OCI-LY7 (cell line): ENCODE measurements at regions of chr5 and their contacts with region 1.

Region 1: GRCh38 chr5:173736923-173737412 is 120.5 kb upstream of the BOD1 start:
- DNase-seq: peak; percentile 86
- H3K4me3 ChIP-seq: peak overlapping the region; percentile 45
- H3K27ac ChIP-seq: peak overlapping the region; percentile 98
- H3K4me1 ChIP-seq: peaks cover 97% of the 10 kb centered on the region
- CTCF ChIP-seq: no peak

Region 2: DNA sequence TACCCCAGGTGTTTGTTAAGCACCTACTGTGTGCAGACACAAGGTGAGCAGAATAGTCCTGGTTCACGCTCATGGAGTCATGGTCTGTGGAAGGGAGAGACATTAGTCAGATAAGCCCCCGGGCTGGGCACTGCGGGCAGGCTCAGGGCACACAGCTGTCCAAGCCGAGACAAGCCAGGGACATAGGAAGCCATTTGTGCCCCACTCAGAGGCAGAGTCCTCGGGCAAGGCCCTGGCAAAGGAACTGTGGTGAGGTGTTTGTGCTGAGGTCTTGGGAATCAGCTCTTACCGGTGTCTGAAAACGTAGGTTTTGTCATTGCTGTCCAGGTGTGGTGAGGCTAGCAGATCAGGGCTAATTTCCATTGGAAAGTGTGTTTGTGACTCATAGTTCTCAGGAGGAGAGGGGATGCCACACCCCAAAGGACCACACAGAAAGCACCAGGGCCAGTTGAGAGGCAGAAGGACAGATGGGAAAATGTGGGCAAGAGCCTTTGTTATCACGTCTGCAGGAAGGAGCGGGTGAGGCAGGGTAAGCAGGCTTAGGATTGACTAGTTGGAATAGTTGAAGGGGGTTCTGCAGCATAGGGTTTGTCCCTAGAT is 1142.0 kb before region 1 on chr5:
- CTCF ChIA-PET with region 1: no interaction called
- POLR2A ChIA-PET with region 1: no interaction called
- intact Hi-C with region 1: no loop called
- DNase-seq: no peak
- H3K4me3 ChIP-seq: no peak overlapping the region
- H3K27ac ChIP-seq: no peak overlapping the region
- H3K4me1 ChIP-seq: no peaks in the 10 kb centered on the region
- CTCF ChIP-seq: no peak

Region 3: GRCh38 chr5:173435447-173435846 is 301.5 kb before region 1 on chr5:
- CTCF ChIA-PET with region 1: no interaction called
- POLR2A ChIA-PET with region 1: no interaction called
- intact Hi-C with region 1: no loop called
- DNase-seq: no peak
- H3K4me3 ChIP-seq: no peak overlapping the region
- H3K27ac ChIP-seq: no peak overlapping the region
- H3K4me1 ChIP-seq: no peaks in the 10 kb centered on the region
- CTCF ChIP-seq: no peak

Region 4: GRCh38 chr5:173625696-173626504 is 111.1 kb before region 1 on chr5:
- CTCF ChIA-PET with region 1: interaction called, 4 read pairs
- POLR2A ChIA-PET with region 1: interaction called, 3 read pairs
- intact Hi-C with region 1: loop called (anchors 5 kb)
- DNase-seq: peak; percentile 83
- H3K4me3 ChIP-seq: no peak overlapping the region
- H3K27ac ChIP-seq: no peak overlapping the region
- H3K4me1 ChIP-seq: peaks cover 50% of the 10 kb centered on the region
- CTCF ChIP-seq: peak; percentile 78

Region 5: DNA sequence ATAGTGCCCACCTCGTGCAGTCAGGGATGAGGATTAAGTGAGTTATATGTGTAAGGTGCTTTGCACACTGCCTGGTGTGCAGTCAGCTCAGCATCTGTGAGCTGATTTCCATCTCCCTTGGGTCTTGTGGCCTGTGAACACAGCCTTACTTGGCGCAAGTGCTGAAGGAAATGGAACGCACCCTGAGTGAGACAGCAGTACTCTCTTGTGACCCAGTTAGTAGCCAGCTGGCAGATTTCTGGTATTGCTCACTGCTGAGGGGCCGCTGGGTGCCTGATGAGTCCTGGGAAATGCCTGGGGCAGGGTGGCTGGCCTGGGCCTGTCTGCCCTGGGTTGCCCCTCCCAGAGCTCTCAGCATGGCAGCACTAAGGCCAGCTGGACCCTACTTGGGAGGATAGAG is 29.6 kb before region 1 on chr5:
- CTCF ChIA-PET with region 1: interaction called, 3 read pairs
- POLR2A ChIA-PET with region 1: interaction called, 14 read pairs
- intact Hi-C with region 1: loop called (anchors 2 kb)
- DNase-seq: peak; percentile 91
- H3K4me3 ChIP-seq: peak overlapping the region; percentile 44
- H3K27ac ChIP-seq: peak overlapping the region; percentile 75
- H3K4me1 ChIP-seq: peaks cover 60% of the 10 kb centered on the region
- CTCF ChIP-seq: no peak

Region 6: GRCh38 chr5:173721256-173722232 is 15.4 kb before region 1 on chr5:
- CTCF ChIA-PET with region 1: interaction called, 8 read pairs
- POLR2A ChIA-PET with region 1: interaction called, 51 read pairs
- intact Hi-C with region 1: no loop called
- DNase-seq: no peak
- H3K4me3 ChIP-seq: no peak overlapping the region
- H3K27ac ChIP-seq: no peak overlapping the region
- H3K4me1 ChIP-seq: peaks cover 50% of the 10 kb centered on the region
- CTCF ChIP-seq: peak; percentile 63

Region 7: DNA sequence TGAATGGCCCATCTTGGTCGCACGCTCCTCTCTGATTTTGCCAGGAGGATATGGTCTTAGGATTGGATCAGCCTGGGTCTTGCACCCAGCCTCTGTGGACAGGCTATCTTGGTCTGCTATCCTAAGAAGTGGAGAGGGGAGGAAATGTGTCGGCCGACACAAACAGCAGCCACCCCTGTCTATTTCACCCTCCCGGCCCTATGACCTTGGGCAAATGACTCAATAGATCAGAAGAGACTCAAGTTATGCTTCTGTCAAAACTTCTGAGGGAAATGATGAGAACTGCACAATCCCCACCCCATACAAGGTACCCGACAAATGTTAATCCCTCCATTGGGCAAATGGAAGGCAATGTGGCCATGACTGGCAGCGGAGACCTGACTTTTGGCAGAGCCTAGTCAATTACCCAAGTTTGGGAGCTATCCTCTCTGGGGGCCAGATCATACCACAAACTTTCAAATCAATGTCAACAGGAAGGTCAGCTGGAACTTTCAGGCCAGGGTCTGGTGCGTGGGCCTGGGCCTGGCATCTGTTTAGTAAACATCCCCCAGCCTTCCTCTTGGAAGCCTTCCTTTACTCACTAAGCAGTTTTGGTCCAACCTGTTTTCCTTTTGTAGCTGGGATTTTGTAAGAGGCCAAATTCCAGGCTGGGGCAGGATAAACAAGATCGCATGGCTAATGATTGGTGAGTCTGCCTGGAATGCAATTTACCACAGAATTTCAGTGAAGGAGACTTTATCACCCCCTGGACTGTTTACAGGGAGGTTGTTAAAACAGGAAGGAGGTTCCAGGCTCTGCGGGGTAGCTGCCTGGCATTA is 87.0 kb after region 1 on chr5:
- CTCF ChIA-PET with region 1: interaction called, 3 read pairs
- POLR2A ChIA-PET with region 1: interaction called, 30 read pairs
- intact Hi-C with region 1: loop called (anchors 1 kb)
- DNase-seq: no peak
- H3K4me3 ChIP-seq: peak overlapping the region; percentile 27
- H3K27ac ChIP-seq: peak overlapping the region; percentile 99
- H3K4me1 ChIP-seq: peaks cover 84% of the 10 kb centered on the region
- CTCF ChIP-seq: no peak